CD4-positive, alpha-beta memory T cell (primary cell): ENCODE measurements at regions of chr4 and their contacts with region 1.

Region 1: DNA sequence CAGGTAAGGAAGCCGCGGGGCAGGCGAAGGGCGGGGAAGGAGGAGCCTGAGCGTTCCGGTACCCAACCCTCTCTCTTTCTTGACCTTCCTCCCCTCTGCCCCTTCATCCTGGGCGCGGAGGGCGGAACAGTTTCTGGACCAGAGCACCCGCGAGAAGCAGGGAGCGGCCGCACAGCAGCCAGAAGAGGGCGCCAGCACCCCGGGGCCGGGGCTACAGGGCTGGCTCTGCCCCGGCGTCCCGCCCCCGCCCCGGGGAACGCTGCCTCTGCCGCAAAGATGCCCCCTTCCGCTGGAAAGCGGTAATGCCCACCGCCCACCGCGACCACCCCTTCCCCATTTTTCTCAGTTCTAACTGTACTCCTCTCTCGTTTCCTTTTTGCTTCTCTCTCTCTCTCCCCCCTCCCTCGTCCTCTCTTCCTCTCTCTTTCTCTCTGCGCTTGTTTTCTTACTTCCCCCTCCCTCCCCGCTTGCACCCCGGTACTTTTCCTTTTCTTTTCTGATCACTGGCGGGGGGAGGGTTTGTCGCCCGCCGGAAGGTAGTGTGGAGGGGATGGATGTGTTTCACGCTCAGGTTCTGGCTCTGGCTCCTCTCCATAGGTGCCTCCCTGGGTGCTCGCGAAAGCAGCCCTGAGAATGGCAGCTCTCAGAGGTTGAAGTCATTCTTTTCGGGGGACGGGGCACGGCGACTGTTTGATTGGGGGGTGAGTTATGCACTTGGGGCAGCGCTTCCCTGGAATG is 13.1 kb upstream of the PRDM8 start:
- DNase-seq: peak; percentile 89 to 93 (median 91)
- H3K4me3 ChIP-seq: peak overlapping the region; percentile 88 to 99
- H3K4me3 Mint-ChIP-seq: peak overlapping the region; percentile 95 to 100 (median 100)
- H3K27ac ChIP-seq: peak overlapping the region; percentile 85
- H3K27ac Mint-ChIP-seq: peak overlapping the region; percentile 94 to 99 (median 98)
- H3K4me1 ChIP-seq: peaks cover 50% of the 10 kb centered on the region
- H3K4me1 Mint-ChIP-seq: peaks cover 38 to 71% (median 47%) of the 10 kb centered on the region in 4 donors
- H3K27me3 ChIP-seq: no peaks in the 10 kb centered on the region
- H3K27me3 Mint-ChIP-seq: no peaks in the 10 kb centered on the region

Region 2: DNA sequence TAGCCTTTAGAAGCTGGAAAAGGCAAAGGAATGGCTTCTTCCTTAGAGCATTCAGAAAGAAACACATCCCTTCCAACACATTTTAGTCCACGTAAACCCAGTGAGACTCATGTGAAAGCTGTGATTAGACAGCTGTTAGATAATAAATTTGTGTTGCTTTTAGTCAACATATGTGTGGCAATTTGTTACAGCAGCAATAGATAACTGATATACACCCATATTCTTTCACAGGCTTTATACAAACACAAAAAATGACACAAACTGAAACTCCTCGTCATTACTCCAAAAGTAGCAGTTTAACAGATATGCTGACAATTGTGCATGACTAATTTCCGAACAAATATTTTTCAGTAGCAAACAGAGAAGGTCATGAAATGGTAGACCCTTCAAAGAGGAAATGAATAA is 176.5 kb before region 1 on chr4:
- CTCF ChIA-PET with region 1: no interaction called
- POLR2A ChIA-PET with region 1: no interaction called
- intact Hi-C with region 1: loop called (anchors 5 kb)
- DNase-seq: no peak
- H3K4me3 ChIP-seq: no peak overlapping the region
- H3K4me3 Mint-ChIP-seq: peak overlapping the region in 7 of 8 donors; percentile 40 to 84 (median 74)
- H3K27ac ChIP-seq: peak overlapping the region; percentile 39
- H3K27ac Mint-ChIP-seq: peak overlapping the region; percentile 83 to 92 (median 91)
- H3K4me1 ChIP-seq: peaks cover 69% of the 10 kb centered on the region
- H3K4me1 Mint-ChIP-seq: peaks cover 46 to 77% (median 59%) of the 10 kb centered on the region in 4 donors
- H3K27me3 ChIP-seq: no peaks in the 10 kb centered on the region
- H3K27me3 Mint-ChIP-seq: no peaks in the 10 kb centered on the region

Region 3: GRCh38 chr4:80072744-80073472 is 111.3 kb before region 1 on chr4 and contains the start of gene ANTXR2:
- CTCF ChIA-PET with region 1: interaction called, 22 read pairs
- POLR2A ChIA-PET with region 1: interaction called, 60 read pairs
- intact Hi-C with region 1: loop called (anchors 1 kb)
- DNase-seq: peak; percentile 64 to 86 (median 68)
- H3K4me3 ChIP-seq: peak within 1 kb of the TSS; percentile 68 to 75
- H3K4me3 Mint-ChIP-seq: peak within 1 kb of the TSS; percentile 97 to 99 (median 98)
- H3K27ac ChIP-seq: peak within 1 kb of the TSS; percentile 86
- H3K27ac Mint-ChIP-seq: peak within 1 kb of the TSS; percentile 97 to 99 (median 98)
- H3K4me1 ChIP-seq: peaks cover 74% of the 10 kb centered on the region
- H3K4me1 Mint-ChIP-seq: peaks cover 47 to 86% (median 59%) of the 10 kb centered on the region in 4 donors
- H3K27me3 ChIP-seq: no peaks in the 10 kb centered on the region
- H3K27me3 Mint-ChIP-seq: no peaks in the 10 kb centered on the region
- total RNA-seq, gene ANTXR2: 90.1 to 91.6 TPM

Region 4: DNA sequence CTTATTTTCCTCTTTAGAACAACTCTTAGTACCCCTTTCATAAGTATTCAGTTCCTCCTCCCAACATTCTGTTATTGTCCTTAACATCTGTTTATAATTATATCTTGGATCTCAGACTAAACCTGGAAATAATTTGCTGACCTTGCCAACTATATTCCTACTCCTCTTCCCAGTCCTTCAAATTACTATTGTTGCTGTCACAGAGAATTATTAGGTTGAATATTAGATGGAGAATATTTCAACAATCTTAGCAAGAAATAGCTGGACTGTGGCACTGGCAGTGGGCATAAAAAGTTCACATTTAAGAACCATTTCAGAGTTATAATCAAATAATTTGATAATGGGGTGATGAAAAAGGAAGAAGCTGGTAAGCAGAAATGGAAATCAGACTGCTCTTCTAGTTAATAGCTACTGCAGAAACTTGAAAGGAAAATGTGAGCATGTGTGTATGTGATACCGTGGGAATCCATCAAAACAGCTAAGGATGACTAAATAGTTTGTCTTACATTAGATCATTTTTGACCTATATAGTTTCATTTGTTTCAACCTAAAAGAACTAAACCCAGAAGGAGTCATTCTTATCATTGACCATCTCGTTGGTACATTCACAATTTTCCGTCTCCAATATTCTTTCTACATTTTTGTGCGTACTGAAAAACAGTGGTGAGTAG is 30.2 kb before region 1 on chr4:
- CTCF ChIA-PET with region 1: interaction called, 18 read pairs
- POLR2A ChIA-PET with region 1: interaction called, 3 read pairs
- intact Hi-C with region 1: no loop called
- DNase-seq: no peak
- H3K4me3 ChIP-seq: no peak overlapping the region
- H3K4me3 Mint-ChIP-seq: peak overlapping the region in 5 of 8 donors; percentile 5 to 51 (median 11)
- H3K27ac ChIP-seq: no peak overlapping the region
- H3K27ac Mint-ChIP-seq: peak overlapping the region in 4 of 7 donors; percentile 1 to 30 (median 13)
- H3K4me1 ChIP-seq: peaks cover 5% of the 10 kb centered on the region
- H3K4me1 Mint-ChIP-seq: peaks cover 0 to 15% (median 5%) of the 10 kb centered on the region in 4 donors
- H3K27me3 ChIP-seq: no peaks in the 10 kb centered on the region
- H3K27me3 Mint-ChIP-seq: peaks cover 0 to 1% of the 10 kb centered on the region in 2 donors

Region 5: DNA sequence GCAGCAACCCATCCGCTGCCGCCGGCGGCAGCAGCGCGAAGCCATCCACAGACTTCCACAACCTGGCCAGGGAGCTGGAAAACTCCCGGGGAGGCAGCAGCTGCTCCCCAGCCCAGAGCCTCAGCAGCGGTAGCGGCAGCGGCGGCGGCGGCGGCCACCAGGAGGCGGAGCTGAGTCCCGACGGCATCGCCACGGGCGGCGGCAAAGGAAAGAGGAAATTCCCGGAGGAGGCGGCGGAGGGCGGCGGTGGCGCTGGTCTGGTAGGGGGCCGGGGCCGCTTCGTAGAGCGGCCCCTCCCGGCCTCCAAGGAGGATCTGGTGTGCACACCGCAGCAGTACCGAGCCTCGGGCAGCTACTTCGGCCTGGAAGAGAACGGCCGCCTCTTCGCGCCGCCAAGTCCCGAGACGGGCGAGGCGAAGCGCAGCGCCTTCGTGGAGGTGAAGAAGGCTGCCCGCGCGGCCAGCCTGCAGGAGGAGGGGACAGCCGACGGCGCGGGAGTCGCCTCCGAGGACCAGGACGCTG is 18.0 kb after region 1 on chr4:
- CTCF ChIA-PET with region 1: interaction called, 221 read pairs
- POLR2A ChIA-PET with region 1: interaction called, 185 read pairs
- intact Hi-C with region 1: loop called (anchors 1 kb)
- DNase-seq: peak; percentile 72 to 81 (median 77)
- H3K4me3 ChIP-seq: peak overlapping the region; percentile 23 to 77
- H3K4me3 Mint-ChIP-seq: peak overlapping the region; percentile 82 to 94 (median 88)
- H3K27ac ChIP-seq: peak overlapping the region; percentile 82
- H3K27ac Mint-ChIP-seq: peak overlapping the region; percentile 89 to 93 (median 91)
- H3K4me1 ChIP-seq: peaks cover 17% of the 10 kb centered on the region
- H3K4me1 Mint-ChIP-seq: peaks cover 23 to 34% (median 27%) of the 10 kb centered on the region in 4 donors
- H3K27me3 ChIP-seq: no peaks in the 10 kb centered on the region
- H3K27me3 Mint-ChIP-seq: no peaks in the 10 kb centered on the region

Region 6: DNA sequence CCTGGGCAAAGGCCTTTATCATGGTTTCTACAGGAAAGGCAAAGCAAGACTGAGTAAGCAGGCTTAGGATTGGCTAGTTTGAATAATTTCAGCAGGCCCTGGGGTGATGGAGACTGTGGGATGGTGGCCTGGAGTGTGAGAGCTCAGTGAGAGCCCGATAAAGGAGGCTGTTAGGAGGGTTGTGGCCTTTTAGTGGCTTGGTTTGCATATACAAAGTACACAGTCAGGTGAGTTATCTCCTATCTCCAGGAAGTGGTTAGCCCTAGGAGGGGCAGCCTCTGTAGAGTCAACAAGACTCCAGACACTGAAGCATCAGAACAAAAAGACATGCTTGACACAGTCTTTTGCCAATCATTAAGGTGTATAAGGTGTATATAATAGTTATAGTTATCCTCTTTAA is 308.5 kb after region 1 on chr4:
- CTCF ChIA-PET with region 1: no interaction called
- POLR2A ChIA-PET with region 1: no interaction called
- intact Hi-C with region 1: loop called (anchors 5 kb)
- DNase-seq: peak; percentile 76 to 83 (median 81)
- H3K4me3 ChIP-seq: no peak overlapping the region
- H3K4me3 Mint-ChIP-seq: peak overlapping the region in 7 of 8 donors; percentile 33 to 79 (median 69)
- H3K27ac ChIP-seq: peak overlapping the region; percentile 24
- H3K27ac Mint-ChIP-seq: peak overlapping the region; percentile 82 to 95 (median 92)
- H3K4me1 ChIP-seq: peaks cover 58% of the 10 kb centered on the region
- H3K4me1 Mint-ChIP-seq: peaks cover 45 to 66% (median 56%) of the 10 kb centered on the region in 4 donors
- H3K27me3 ChIP-seq: no peaks in the 10 kb centered on the region
- H3K27me3 Mint-ChIP-seq: no peaks in the 10 kb centered on the region

Region 7: DNA sequence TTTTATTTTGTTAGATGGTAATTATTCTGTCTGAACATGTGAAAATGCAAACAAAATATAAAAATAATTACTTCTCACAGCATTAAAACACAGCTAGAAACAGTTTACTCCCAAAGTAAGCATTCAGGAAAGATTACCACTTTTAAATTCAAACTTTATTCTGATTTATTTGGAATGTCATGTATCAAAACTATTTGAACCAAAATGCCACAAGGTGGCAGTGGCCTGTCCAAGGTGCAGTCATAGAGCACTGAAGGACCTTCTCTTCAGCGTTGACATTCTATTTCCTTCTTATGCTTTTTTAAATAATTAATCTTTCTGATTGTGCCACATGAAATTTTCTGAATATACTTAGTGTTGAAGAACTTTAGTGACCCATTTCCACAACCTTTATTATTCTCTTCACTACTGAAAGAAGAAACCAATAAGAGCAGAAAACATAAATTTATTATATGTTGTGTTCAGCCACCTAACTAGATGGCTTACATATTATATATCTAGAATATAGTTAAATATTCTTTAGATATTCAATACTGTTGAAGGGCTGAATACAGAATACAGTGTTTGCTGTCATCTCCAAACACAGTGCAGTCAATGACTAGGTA is 434.9 kb after region 1 on chr4:
- CTCF ChIA-PET with region 1: no interaction called
- POLR2A ChIA-PET with region 1: no interaction called
- intact Hi-C with region 1: no loop called
- DNase-seq: no peak
- H3K4me3 ChIP-seq: no peak overlapping the region
- H3K4me3 Mint-ChIP-seq: no peak overlapping the region
- H3K27ac ChIP-seq: no peak overlapping the region
- H3K27ac Mint-ChIP-seq: no peak overlapping the region
- H3K4me1 ChIP-seq: no peaks in the 10 kb centered on the region
- H3K4me1 Mint-ChIP-seq: no peaks in the 10 kb centered on the region
- H3K27me3 ChIP-seq: no peaks in the 10 kb centered on the region
- H3K27me3 Mint-ChIP-seq: peaks cover 0 to 2% of the 10 kb centered on the region in 2 donors